ENCODE measurements at regions of chr6 and their contacts with region 1.

Region 1: DNA sequence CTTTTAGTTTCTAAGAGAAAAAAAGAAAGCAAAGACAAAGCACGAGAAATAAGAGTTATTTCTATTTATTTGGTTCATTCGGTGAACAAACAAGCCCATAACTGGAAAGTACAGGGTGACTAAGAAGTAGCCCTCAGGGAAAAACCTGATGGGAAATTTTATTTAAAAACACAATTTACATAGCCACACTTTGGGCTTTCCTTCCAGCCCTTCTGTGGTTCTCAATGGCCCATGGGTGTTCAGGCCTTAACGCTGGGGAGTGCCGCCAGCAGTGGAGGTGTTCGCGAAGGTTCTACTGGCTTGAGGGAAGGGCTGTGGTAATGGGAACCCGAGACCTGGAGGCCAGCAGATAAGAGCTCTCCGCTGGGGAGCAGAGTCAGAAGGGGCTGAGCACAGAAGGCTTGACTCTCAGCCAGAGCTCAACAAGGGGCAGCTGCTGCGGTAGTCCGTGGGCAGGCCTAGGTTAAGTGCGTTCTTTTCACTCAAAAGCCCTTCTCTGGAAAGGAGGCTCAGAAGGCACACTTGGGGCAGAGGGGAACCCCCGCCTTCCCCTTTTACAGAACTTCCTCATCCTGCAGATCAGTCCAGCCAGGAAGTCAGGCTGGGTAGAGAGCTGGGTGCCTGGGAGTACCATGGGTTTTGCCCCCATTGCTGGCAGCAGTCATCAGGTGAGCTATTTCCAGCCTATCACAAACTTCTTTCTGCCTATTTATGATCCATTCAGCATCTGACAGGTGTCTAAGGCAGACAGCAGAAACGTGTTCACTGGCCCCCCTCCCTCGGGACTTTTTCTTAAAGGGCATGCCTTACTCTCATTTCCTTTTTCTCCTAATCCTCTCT is 8.8 kb upstream of the CD83 start:
- DNase-seq: peak; percentile 97
- ATAC-seq: peak; percentile 82
- H3K4me3 ChIP-seq: peak overlapping the region; percentile 32; the same call in 1 of the 2 replicates
- H3K27ac ChIP-seq: peak overlapping the region; percentile 85
- H3K4me1 ChIP-seq: peaks cover 43% of the 10 kb centered on the region
- H3K27me3 ChIP-seq: no peaks in the 10 kb centered on the region
- CTCF ChIP-seq: no peak
- EP300 ChIP-seq: peak; percentile 46 to 66; a peak in 3 of 4 replicates
- POLR2A ChIP-seq: peak; percentile 59
- RAD21 ChIP-seq: no peak

Region 2: DNA sequence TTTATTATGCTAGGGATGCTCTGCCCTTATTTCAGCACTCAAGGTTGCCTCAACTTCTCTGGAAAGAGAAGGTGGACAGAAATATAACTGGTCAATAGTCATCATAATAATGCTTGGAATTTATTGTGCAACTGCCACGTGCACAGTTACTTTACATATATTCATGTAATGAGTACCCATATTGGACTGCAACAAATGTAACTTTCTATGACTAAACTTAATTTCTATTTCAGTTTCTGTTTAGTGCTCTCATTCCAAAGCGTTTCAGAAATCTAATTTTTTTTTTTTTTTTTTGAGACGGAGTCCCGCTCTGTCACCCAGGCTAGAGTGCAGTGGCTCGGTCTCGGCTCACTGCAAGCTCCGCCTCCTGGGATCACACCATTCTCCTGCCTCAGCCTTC is 19.6 kb before region 1 on chr6:
- CTCF ChIA-PET with region 1: interaction called, 54 read pairs
- POLR2A ChIA-PET with region 1: interaction called, 126 read pairs
- RAD21 ChIA-PET with region 1: interaction called, 164 read pairs
- SMC1A ChIA-PET with region 1: interaction called, 319 read pairs
- in situ Hi-C with region 1: no loop called
- intact Hi-C with region 1: loop called (anchors 1 kb)
- DNase-seq: no peak
- ATAC-seq: peak; percentile 53
- H3K4me3 ChIP-seq: peak overlapping the region; percentile 4; the same call in 1 of the 2 replicates
- H3K27ac ChIP-seq: no peak overlapping the region
- H3K4me1 ChIP-seq: peaks cover 66% of the 10 kb centered on the region
- H3K27me3 ChIP-seq: no peaks in the 10 kb centered on the region
- CTCF ChIP-seq: no peak
- EP300 ChIP-seq: 0 out of 4 replicates have a peak, but pooled peaks of 1 of the 2 experiments have one; percentile 18
- POLR2A ChIP-seq: no peak
- RAD21 ChIP-seq: no peak

Region 3: DNA sequence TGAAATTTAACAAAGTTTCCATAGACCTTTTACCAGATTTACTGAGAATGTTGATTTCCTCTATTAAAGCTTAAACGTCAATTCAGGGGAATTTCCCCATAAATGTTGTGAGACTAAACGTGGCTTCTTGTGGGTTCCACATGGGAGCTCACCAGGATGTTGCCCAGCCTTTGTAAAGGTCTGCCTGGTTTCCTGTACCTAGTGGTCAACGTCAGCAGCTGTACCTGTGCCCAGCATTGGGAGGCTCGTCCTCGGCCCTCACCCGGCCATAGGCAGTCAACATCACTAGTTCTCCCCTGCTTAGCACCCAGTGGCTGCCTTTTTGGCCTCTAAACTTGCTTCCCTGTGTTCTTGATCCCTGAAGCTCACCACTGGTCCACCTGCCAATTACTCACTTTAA is 13.4 kb before region 1 on chr6:
- CTCF ChIA-PET with region 1: interaction called, 54 read pairs
- POLR2A ChIA-PET with region 1: interaction called, 126 read pairs
- RAD21 ChIA-PET with region 1: interaction called, 164 read pairs
- SMC1A ChIA-PET with region 1: interaction called, 319 read pairs
- in situ Hi-C with region 1: no loop called
- intact Hi-C with region 1: loop called (anchors 1 kb)
- DNase-seq: no peak
- ATAC-seq: peak; percentile 79
- H3K4me3 ChIP-seq: no peak overlapping the region
- H3K27ac ChIP-seq: peak overlapping the region; percentile 80; the same call in 1 of the 2 replicates
- H3K4me1 ChIP-seq: peaks cover 56% of the 10 kb centered on the region
- H3K27me3 ChIP-seq: no peaks in the 10 kb centered on the region
- CTCF ChIP-seq: no peak
- EP300 ChIP-seq: peak; percentile 87 to 91; a peak in 3 of 4 replicates
- POLR2A ChIP-seq: no peak
- RAD21 ChIP-seq: no peak

Region 4: DNA sequence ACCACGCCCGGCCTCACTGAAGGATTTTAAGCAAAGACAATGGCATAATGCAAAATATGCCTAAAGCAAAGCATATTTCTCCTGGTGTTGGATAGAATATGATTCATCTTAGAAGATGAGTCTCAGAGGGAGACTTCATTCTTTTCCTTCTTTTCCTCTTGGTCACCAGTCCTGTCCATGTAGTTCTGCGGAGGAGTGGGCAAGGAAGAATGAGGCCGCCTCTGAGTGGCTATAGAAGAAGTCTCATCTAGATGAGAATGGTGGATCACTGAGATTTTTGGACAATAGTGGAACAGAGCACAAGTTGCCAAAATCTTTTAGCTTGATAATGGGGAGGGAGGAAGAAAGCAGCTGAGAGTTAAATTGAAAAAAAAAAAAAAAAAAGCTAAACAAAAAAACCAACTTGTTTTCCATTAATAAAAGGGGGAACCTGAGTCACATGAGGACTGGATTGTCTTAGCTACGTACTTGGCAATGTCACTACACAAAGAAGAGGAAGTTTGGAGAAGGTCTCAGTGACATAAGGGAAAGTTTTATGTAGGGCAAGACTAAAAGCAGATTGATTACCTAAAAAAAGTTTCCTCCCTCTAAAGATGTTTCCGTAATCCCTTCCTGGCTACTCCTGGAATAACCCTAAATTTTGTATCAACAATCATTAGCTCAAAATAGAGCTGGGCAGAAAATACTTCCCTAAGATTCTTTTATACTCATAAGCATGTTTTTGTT is 14.8 kb after region 1 on chr6:
- CTCF ChIA-PET with region 1: interaction called, 33 read pairs
- POLR2A ChIA-PET with region 1: interaction called, 51 read pairs
- RAD21 ChIA-PET with region 1: interaction called, 111 read pairs
- SMC1A ChIA-PET with region 1: interaction called, 62 read pairs
- in situ Hi-C with region 1: no loop called
- intact Hi-C with region 1: loop called (anchors 2 kb)
- DNase-seq: no peak
- ATAC-seq: no peak
- H3K4me3 ChIP-seq: peak overlapping the region; percentile 48; the same call in 1 of the 2 replicates
- H3K27ac ChIP-seq: no peak overlapping the region
- H3K4me1 ChIP-seq: peaks cover 24% of the 10 kb centered on the region
- H3K27me3 ChIP-seq: no peaks in the 10 kb centered on the region
- CTCF ChIP-seq: no peak
- EP300 ChIP-seq: peak in 1 of 2 experiments; percentile 44; a peak in 1 of 4 replicates
- POLR2A ChIP-seq: no peak
- RAD21 ChIP-seq: no peak

Region 5: DNA sequence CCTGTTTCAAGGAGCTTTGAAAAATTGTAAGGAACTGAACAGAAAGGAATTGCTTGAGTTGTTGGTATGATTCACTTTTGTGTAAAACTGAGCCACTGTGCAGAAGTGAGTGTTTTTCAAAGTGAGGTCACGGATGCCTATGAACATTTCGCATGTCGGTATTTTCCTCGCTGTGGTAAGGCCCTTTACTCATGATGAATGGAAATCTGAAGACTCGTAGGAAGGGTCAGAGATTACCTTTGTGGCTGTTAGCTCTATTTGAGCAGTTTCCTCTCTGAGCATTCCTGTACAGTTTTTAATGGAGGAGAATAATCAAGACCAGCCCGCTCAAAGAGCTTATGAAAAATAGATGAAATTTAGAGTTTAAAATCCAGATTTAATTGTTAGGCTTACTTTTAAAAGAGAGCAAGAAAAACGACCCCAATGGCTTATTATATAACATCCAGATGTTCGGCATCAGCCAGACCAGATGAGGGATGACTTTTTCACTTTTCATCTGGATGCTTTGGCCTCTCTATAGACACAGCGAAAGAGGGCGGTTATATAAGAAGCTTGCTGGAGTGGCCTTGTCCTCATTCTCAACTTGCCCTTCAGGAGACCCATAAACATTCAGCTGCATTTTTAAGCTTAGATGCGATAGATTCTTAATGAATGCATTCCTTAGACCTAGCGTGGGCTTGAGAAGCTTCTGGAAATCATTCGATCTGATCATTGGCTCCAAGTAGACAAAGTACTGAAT is 108.3 kb after region 1 on chr6:
- CTCF ChIA-PET with region 1: no interaction called
- POLR2A ChIA-PET with region 1: no interaction called
- RAD21 ChIA-PET with region 1: no interaction called
- SMC1A ChIA-PET with region 1: no interaction called
- in situ Hi-C with region 1: no loop called
- intact Hi-C with region 1: no loop called
- DNase-seq: no peak
- ATAC-seq: no peak
- H3K4me3 ChIP-seq: no peak overlapping the region
- H3K27ac ChIP-seq: no peak overlapping the region
- H3K4me1 ChIP-seq: no peaks in the 10 kb centered on the region
- H3K27me3 ChIP-seq: no peaks in the 10 kb centered on the region
- CTCF ChIP-seq: no peak
- EP300 ChIP-seq: no peak
- POLR2A ChIP-seq: no peak
- RAD21 ChIP-seq: no peak